ENCODE measurements at regions of chr14 and their contacts with region 1.

Region 1: GRCh38 chr14:58501214-58501816 is 73.8 kb downstream of the KIAA0586 start:
- DNase-seq: no peak
- ATAC-seq: peak in 3 of 4 donors; percentile 50 to 69 (median 58)
- H3K4me3 ChIP-seq: no peak overlapping the region
- H3K27ac ChIP-seq: no peak overlapping the region
- H3K4me1 ChIP-seq: no peaks in the 10 kb centered on the region
- H3K27me3 ChIP-seq: no peaks in the 10 kb centered on the region
- CTCF ChIP-seq: peak; percentile 64 to 87 (median 78)
- POLR2A ChIP-seq: no peak

Region 2: GRCh38 chr14:59055439-59056045 is 554.2 kb after region 1 on chr14:
- intact Hi-C with region 1: loop called in 9 of 10 experiments (anchors 1 to 10 kb)
- DNase-seq: peak in 1 of 5 donors; percentile 12
- ATAC-seq: peak in 3 of 4 donors; percentile 55 to 70 (median 58)
- H3K4me3 ChIP-seq: no peak overlapping the region
- H3K27ac ChIP-seq: no peak overlapping the region
- H3K4me1 ChIP-seq: no peaks in the 10 kb centered on the region
- H3K27me3 ChIP-seq: peaks cover 0 to 5% (median 0%) of the 10 kb centered on the region in 9 donors
- CTCF ChIP-seq: peak; percentile 49 to 84 (median 70)
- POLR2A ChIP-seq: no peak

Region 3: DNA sequence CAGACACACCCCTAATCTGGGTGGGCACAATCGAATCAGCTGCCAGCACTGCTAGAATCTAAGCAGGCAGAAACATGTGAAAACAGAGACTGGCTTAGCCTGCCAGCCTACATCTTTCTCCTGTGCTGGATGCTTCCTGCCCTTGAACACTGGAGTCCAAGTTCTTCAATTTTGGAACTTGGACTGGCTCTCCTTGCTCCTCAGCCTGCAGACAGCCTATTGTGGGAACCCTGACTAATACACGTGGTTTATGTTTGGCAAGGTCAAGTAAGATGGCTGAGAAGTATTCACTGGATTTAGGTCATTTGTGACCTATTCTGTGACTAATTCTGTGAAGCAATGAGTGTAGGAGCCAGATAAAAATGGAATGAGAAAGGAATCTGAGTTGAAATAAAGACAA is 952.8 kb after region 1 on chr14:
- intact Hi-C with region 1: loop called in 2 of 10 experiments (anchors 10 kb)
- DNase-seq: peak in 2 of 5 donors; percentile 15 to 34
- ATAC-seq: peak; percentile 67 to 96 (median 90)
- H3K4me3 ChIP-seq: no peak overlapping the region
- H3K27ac ChIP-seq: peak overlapping the region in 4 of 12 donors; percentile 38 to 49 (median 42)
- H3K4me1 ChIP-seq: peaks cover 0 to 5% (median 0%) of the 10 kb centered on the region in 12 donors
- H3K27me3 ChIP-seq: no peaks in the 10 kb centered on the region
- CTCF ChIP-seq: no peak
- POLR2A ChIP-seq: no peak

Measured in heart left ventricle (tissue), 16 donors.